ENCODE measurements at regions of chr3 and their contacts with region 1.

Region 1: GRCh38 chr3:14216257-14217048 is 37.8 kb downstream of the LSM3 start:
- DNase-seq: peak; percentile 47 to 65
- ATAC-seq: peak in 2 of 3 donors; percentile 67 to 96
- H3K4me3 ChIP-seq: no peak overlapping the region
- H3K4me3 Mint-ChIP-seq: peak overlapping the region; percentile 49
- H3K27ac ChIP-seq: no peak overlapping the region
- H3K27ac Mint-ChIP-seq: peak overlapping the region in 1 of 2 donors; percentile 88
- H3K4me1 ChIP-seq: no peaks in the 10 kb centered on the region
- H3K4me1 Mint-ChIP-seq: peaks cover 0 to 15% of the 10 kb centered on the region in 2 donors
- H3K27me3 ChIP-seq: no peaks in the 10 kb centered on the region
- H3K27me3 Mint-ChIP-seq: peaks cover 8 to 9% of the 10 kb centered on the region in 2 donors
- CTCF ChIP-seq: peak; percentile 61

Region 2: DNA sequence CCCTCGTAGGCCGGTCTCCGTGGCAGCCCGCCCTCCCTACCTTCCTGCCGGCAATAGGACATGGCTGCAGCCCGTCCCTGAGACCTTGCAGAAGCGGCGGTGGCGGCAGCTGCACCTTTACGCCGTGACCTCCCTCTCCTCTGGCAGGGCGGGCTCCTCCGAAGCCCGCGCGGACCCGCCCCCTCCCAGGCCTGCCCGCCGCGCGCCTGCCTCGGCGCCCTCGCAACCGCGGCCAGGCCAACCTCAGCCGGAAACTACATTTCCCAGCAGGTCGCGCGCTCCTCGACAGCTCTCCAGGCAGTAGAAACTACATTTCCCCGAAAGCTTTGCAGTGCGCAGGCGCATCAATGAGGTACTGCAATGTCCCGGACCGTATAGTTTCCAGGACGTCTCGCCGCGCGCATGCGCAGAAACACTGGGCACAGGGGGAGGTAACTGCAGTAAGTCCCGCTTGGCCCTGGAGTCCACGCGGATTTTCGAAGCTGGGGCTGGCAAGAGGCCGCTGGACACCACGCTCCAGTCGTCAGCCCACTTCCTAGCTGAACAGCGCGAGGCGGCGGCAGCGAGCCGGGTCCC is 91.8 kb before region 1 on chr3 and contains the starts of genes CHCHD4 and TMEM43:
- intact Hi-C with region 1: loop called (anchors 1 kb)
- DNase-seq: peak; percentile 97 to 100
- ATAC-seq: peak; percentile 89 to 97 (median 90)
- H3K4me3 ChIP-seq: peak within 1 kb of the TSS; percentile 97
- H3K4me3 Mint-ChIP-seq: peak within 1 kb of the TSS; percentile 96
- H3K27ac ChIP-seq: peak within 1 kb of the TSS; percentile 91
- H3K27ac Mint-ChIP-seq: peak within 1 kb of the TSS; percentile 92 to 93
- H3K4me1 ChIP-seq: peaks cover 39% of the 10 kb centered on the region
- H3K4me1 Mint-ChIP-seq: peaks cover 50 to 55% of the 10 kb centered on the region in 2 donors
- H3K27me3 ChIP-seq: no peaks in the 10 kb centered on the region
- H3K27me3 Mint-ChIP-seq: no peaks in the 10 kb centered on the region
- CTCF ChIP-seq: no peak
- total RNA-seq, gene CHCHD4: 2.1 to 4.3 (median 3.4) TPM
- total RNA-seq, gene TMEM43: 49.5 to 61.1 (median 54.1) TPM